HEK293 (cell line): ENCODE measurements at regions of chr6 and their contacts with region 1.

Region 1: GRCh38 chr6:3410385-3411360 is 46.2 kb downstream of the SLC22A23 start:
- H3K4me3 ChIP-seq: no peak overlapping the region
- H3K27ac ChIP-seq: no peak overlapping the region
- H3K4me1 ChIP-seq: peaks cover 8% of the 10 kb centered on the region
- CTCF ChIP-seq: 0 out of 2 replicates have a peak, but pooled peaks have one; percentile 27

Region 2: GRCh38 chr6:3247255-3248146 is 163.2 kb before region 1 on chr6:
- CTCF ChIA-PET with region 1: no interaction called
- POLR2A ChIA-PET with region 1: no interaction called
- H3K4me3 ChIP-seq: peak overlapping the region; percentile 19
- H3K27ac ChIP-seq: peak overlapping the region; percentile 20; the same call in 1 of the 2 replicates
- H3K4me1 ChIP-seq: peaks cover 6% of the 10 kb centered on the region; the same call in 1 of the 2 replicates
- CTCF ChIP-seq: no peak

Region 3: GRCh38 chr6:3281631-3282475 is 128.8 kb before region 1 on chr6:
- CTCF ChIA-PET with region 1: interaction called, 14 read pairs
- POLR2A ChIA-PET with region 1: no interaction called
- H3K4me3 ChIP-seq: no peak overlapping the region
- H3K27ac ChIP-seq: no peak overlapping the region
- H3K4me1 ChIP-seq: no peaks in the 10 kb centered on the region
- CTCF ChIP-seq: no peak

Region 4: GRCh38 chr6:3396503-3397180 is 14.0 kb before region 1 on chr6:
- CTCF ChIA-PET with region 1: interaction called, 13 read pairs
- POLR2A ChIA-PET with region 1: no interaction called
- H3K4me3 ChIP-seq: no peak overlapping the region
- H3K27ac ChIP-seq: no peak overlapping the region
- H3K4me1 ChIP-seq: peaks cover 11% of the 10 kb centered on the region; the same call in 1 of the 2 replicates
- CTCF ChIP-seq: no peak

Region 5: DNA sequence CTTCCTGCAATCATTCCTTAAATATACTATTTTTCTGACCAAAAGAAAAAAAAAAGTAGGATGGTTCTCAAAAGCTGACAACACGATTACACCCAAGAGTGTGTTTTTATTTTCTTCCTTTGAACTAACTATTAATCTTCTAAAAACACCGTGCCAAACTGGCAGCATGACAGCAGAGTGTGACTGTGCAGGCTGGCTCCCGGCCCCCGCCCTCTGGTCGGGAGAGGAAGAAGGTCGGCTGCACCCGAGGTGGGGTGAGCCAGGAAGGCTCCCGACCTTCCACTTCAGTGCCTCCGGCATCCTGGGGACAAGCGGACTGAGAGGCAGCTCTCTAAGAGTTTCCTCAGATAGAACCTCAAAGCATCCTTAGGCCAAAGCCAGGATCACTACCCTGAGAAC is 17.0 kb after region 1 on chr6:
- CTCF ChIA-PET with region 1: interaction called, 25 read pairs
- POLR2A ChIA-PET with region 1: no interaction called
- H3K4me3 ChIP-seq: no peak overlapping the region
- H3K27ac ChIP-seq: no peak overlapping the region
- H3K4me1 ChIP-seq: peaks cover 20% of the 10 kb centered on the region
- CTCF ChIP-seq: no peak

Region 6: GRCh38 chr6:3457467-3458333 is 47.0 kb after region 1 on chr6:
- CTCF ChIA-PET with region 1: interaction called, 11 read pairs
- POLR2A ChIA-PET with region 1: interaction called, 3 read pairs
- H3K4me3 ChIP-seq: peak overlapping the region; percentile 86
- H3K27ac ChIP-seq: peak overlapping the region; percentile 95
- H3K4me1 ChIP-seq: peaks cover 6% of the 10 kb centered on the region; the same call in 1 of the 2 replicates
- CTCF ChIP-seq: no peak